GM12878 (cell line): ENCODE measurements at regions of chr2 and their contacts with region 1.

Region 1: DNA sequence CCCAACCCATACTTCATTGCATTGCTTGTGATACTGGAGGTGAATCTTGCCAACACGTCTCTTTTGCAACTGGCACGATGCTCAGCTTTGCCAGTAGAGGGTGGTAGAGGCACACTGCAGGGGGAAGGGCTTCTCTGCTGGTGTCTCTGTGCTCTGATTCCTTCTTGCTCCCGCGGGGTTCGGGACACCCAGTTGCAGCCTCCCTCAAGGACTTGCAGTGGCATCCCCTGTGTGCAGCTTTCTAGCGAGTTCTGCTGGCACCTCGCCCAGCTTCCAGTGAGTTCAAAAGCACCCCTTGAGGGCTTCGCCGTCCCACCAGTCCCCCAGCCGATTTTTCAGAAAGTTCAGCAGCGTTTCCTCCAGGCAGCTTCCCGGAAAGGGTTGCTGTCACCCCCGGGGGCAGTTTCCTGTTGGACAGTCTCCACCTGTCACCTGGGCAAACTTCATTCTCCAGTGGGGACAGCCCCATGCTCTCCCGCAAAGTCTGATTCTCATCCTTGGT is 35.3 kb upstream of the EN1 start:
- DNase-seq: no peak
- ATAC-seq: peak; percentile 93
- H3K4me3 ChIP-seq: no peak overlapping the region; the same call in 1 of the 2 replicates
- H3K27ac ChIP-seq: no peak overlapping the region
- H3K4me1 ChIP-seq: no peaks in the 10 kb centered on the region
- H3K27me3 ChIP-seq: no peaks in the 10 kb centered on the region
- CTCF ChIP-seq: peak; percentile 91 to 97 (median 97)
- EP300 ChIP-seq: no peak
- POLR2A ChIP-seq: no peak
- RAD21 ChIP-seq: peak; percentile 88

Region 2: GRCh38 chr2:118893100-118893499 is 10.3 kb after region 1 on chr2:
- CTCF ChIA-PET with region 1: interaction called, 16 read pairs
- POLR2A ChIA-PET with region 1: no interaction called
- RAD21 ChIA-PET with region 1: interaction called, 3 read pairs
- SMC1A ChIA-PET with region 1: no interaction called
- in situ Hi-C with region 1: no loop called
- intact Hi-C with region 1: no loop called
- DNase-seq: no peak
- ATAC-seq: no peak
- H3K4me3 ChIP-seq: no peak overlapping the region
- H3K27ac ChIP-seq: no peak overlapping the region
- H3K4me1 ChIP-seq: no peaks in the 10 kb centered on the region
- H3K27me3 ChIP-seq: no peaks in the 10 kb centered on the region
- CTCF ChIP-seq: no peak
- EP300 ChIP-seq: no peak
- POLR2A ChIP-seq: no peak
- RAD21 ChIP-seq: no peak

Region 3: GRCh38 chr2:119049968-119050704 is 167.4 kb after region 1 on chr2:
- CTCF ChIA-PET with region 1: interaction called, 10 read pairs
- POLR2A ChIA-PET with region 1: no interaction called
- RAD21 ChIA-PET with region 1: no interaction called
- SMC1A ChIA-PET with region 1: interaction called, 3 read pairs
- in situ Hi-C with region 1: no loop called
- intact Hi-C with region 1: no loop called
- DNase-seq: no peak
- ATAC-seq: no peak
- H3K4me3 ChIP-seq: no peak overlapping the region
- H3K27ac ChIP-seq: no peak overlapping the region
- H3K4me1 ChIP-seq: no peaks in the 10 kb centered on the region
- H3K27me3 ChIP-seq: no peaks in the 10 kb centered on the region
- CTCF ChIP-seq: peak in 2 of 3 experiments; percentile 5 to 19; a peak in 1 of 6 replicates
- EP300 ChIP-seq: no peak
- POLR2A ChIP-seq: no peak
- RAD21 ChIP-seq: no peak

Region 4: GRCh38 chr2:119126650-119127049 is 243.9 kb after region 1 on chr2:
- CTCF ChIA-PET with region 1: interaction called, 54 read pairs
- POLR2A ChIA-PET with region 1: no interaction called
- RAD21 ChIA-PET with region 1: interaction called, 3 read pairs
- SMC1A ChIA-PET with region 1: interaction called, 7 read pairs
- in situ Hi-C with region 1: no loop called
- intact Hi-C with region 1: loop called (anchors 2 kb)
- DNase-seq: no peak
- ATAC-seq: peak; percentile 69
- H3K4me3 ChIP-seq: no peak overlapping the region
- H3K27ac ChIP-seq: no peak overlapping the region
- H3K4me1 ChIP-seq: no peaks in the 10 kb centered on the region
- H3K27me3 ChIP-seq: no peaks in the 10 kb centered on the region
- CTCF ChIP-seq: peak; percentile 49 to 80 (median 57)
- EP300 ChIP-seq: no peak
- POLR2A ChIP-seq: no peak
- RAD21 ChIP-seq: peak; percentile 33; the same call in 1 of the 2 replicates

Region 5: DNA sequence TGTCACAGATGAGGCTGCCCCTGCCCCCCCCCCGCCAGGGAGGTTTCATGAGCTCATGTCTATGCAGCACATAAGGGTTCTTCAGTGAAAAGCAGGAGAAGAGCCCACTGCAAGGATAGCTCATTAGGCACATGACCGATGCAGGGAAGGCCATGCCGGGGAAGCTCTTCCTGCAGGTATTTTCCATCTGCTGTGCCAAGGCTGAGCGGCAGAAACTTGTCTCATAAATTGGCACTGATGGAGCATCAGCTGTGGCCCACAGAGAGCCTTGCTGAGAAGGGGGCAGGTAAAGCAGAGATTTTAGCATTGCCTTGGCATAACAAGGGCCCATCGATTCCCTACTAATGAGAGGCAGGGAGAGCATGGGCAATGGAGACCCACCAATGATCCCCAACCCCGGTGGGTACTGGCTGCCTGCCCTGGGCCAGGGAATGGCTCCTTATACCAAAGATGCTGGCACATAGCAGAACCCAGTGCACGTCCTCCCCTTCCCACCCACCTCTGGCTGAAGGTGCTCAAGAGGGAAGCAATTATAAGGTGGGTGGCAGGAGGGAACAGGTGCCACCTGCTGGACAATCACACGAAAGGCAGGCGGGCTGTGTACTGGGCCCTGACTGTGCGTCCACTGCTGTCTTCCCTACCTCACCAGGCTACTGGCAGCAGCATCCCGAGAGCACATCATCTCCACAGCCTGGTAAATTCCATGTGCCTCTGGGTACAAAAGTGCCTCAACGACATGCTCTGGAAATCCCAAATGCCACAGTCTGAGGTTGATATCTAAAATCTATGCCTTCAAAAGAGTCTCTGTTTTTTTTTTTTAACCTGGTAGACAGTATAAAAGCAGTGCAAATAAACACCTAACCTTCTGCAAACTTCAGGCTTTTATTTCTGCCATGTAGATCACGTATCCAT is 382.3 kb after region 1 on chr2:
- CTCF ChIA-PET with region 1: interaction called, 11 read pairs
- POLR2A ChIA-PET with region 1: no interaction called
- RAD21 ChIA-PET with region 1: interaction called, 10 read pairs
- SMC1A ChIA-PET with region 1: interaction called, 4 read pairs
- in situ Hi-C with region 1: no loop called
- intact Hi-C with region 1: loop called (anchors 1 kb)
- DNase-seq: peak; percentile 7
- ATAC-seq: peak; percentile 100
- H3K4me3 ChIP-seq: no peak overlapping the region
- H3K27ac ChIP-seq: no peak overlapping the region
- H3K4me1 ChIP-seq: no peaks in the 10 kb centered on the region
- H3K27me3 ChIP-seq: no peaks in the 10 kb centered on the region
- CTCF ChIP-seq: peak; percentile 85 to 94 (median 88)
- EP300 ChIP-seq: no peak
- POLR2A ChIP-seq: no peak
- RAD21 ChIP-seq: peak; percentile 75

Region 6: GRCh38 chr2:119311356-119311755 is 428.6 kb after region 1 on chr2:
- CTCF ChIA-PET with region 1: interaction called, 11 read pairs
- POLR2A ChIA-PET with region 1: no interaction called
- RAD21 ChIA-PET with region 1: interaction called, 6 read pairs
- SMC1A ChIA-PET with region 1: interaction called, 7 read pairs
- in situ Hi-C with region 1: loop called (anchors 5 kb)
- intact Hi-C with region 1: loop called (anchors 1 kb)
- DNase-seq: no peak
- ATAC-seq: peak; percentile 31; the same call in 2 of the 3 replicates
- H3K4me3 ChIP-seq: no peak overlapping the region
- H3K27ac ChIP-seq: no peak overlapping the region; the same call in 1 of the 2 replicates
- H3K4me1 ChIP-seq: peaks cover 27% of the 10 kb centered on the region
- H3K27me3 ChIP-seq: no peaks in the 10 kb centered on the region
- CTCF ChIP-seq: no peak
- EP300 ChIP-seq: no peak
- POLR2A ChIP-seq: no peak
- RAD21 ChIP-seq: peak; percentile 62

Region 7: GRCh38 chr2:119366161-119366648 is 483.4 kb after region 1 on chr2:
- CTCF ChIA-PET with region 1: no interaction called
- POLR2A ChIA-PET with region 1: no interaction called
- RAD21 ChIA-PET with region 1: no interaction called
- SMC1A ChIA-PET with region 1: no interaction called
- in situ Hi-C with region 1: no loop called
- intact Hi-C with region 1: no loop called
- DNase-seq: no peak
- ATAC-seq: peak; percentile 5
- H3K4me3 ChIP-seq: peak overlapping the region; percentile 87
- H3K27ac ChIP-seq: peak overlapping the region; percentile 85
- H3K4me1 ChIP-seq: peaks cover 19% of the 10 kb centered on the region
- H3K27me3 ChIP-seq: no peaks in the 10 kb centered on the region
- CTCF ChIP-seq: no peak
- EP300 ChIP-seq: 0 out of 4 replicates have a peak, but pooled peaks of 1 of the 2 experiments have one; percentile 3
- POLR2A ChIP-seq: no peak
- RAD21 ChIP-seq: no peak

Region 8: DNA sequence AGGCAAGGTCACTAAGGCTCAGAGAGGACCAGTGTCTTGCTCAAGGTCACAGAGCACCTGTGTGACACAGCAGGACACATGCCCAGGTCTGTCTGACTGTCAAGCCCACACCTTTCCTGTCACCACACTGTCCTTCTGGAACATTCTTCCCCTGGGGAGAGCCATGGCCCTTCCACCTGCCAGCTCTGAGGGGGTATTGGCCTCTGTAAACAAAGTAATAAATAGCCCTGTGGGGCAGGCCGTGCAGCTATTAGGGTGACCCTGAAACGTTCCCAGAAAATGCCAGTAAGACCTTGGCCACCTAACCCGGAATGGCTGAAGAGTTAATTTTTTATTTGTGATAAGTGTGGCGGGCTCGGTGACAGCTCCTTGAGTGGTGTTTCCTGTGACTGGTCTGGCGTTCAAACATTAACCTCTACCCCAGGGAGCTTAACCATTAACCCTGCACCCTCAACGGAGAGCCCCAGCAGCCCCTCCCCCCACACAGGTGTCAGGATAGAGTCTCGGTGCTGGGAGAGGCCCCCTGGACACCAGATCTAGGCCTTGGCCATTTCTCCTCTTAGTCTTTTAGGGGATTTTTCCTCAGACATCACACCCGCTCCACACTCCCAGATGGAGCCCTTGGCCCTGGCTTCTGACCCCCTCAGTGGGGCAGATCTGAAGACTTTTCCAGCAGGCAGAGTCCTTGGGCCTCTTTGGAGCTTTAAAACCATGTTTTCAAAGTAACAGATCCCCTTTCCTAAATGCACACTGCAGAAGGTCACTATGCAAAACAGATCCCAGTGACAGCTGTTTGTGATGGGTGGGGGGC is 604.9 kb after region 1 on chr2:
- CTCF ChIA-PET with region 1: interaction called, 4 read pairs
- POLR2A ChIA-PET with region 1: no interaction called
- RAD21 ChIA-PET with region 1: interaction called, 3 read pairs
- SMC1A ChIA-PET with region 1: no interaction called
- in situ Hi-C with region 1: loop called (anchors 10 kb)
- intact Hi-C with region 1: no loop called
- DNase-seq: peak; percentile 34
- ATAC-seq: peak; percentile 88
- H3K4me3 ChIP-seq: no peak overlapping the region
- H3K27ac ChIP-seq: no peak overlapping the region
- H3K4me1 ChIP-seq: no peaks in the 10 kb centered on the region
- H3K27me3 ChIP-seq: no peaks in the 10 kb centered on the region; a peak in 1 of 4 replicates
- CTCF ChIP-seq: no peak
- EP300 ChIP-seq: peak in 1 of 2 experiments; percentile 46; a peak in 1 of 4 replicates
- POLR2A ChIP-seq: no peak
- RAD21 ChIP-seq: no peak